Activated naive CD4-positive, alpha-beta T cell treated with anti-CD3 and anti-CD28 coated beads for 36 hours (primary cell): ENCODE measurements at regions of chr12 and their contacts with region 1.

Region 1: GRCh38 chr12:12356886-12357718 is at the start of gene BORCS5:
- DNase-seq: peak; percentile 98
- H3K4me3 Mint-ChIP-seq: peak within 1 kb of the TSS; percentile 81
- H3K27ac Mint-ChIP-seq: peak within 1 kb of the TSS; percentile 90
- H3K4me1 Mint-ChIP-seq: peaks cover 41% of the 10 kb centered on the region
- H3K27me3 Mint-ChIP-seq: no peaks in the 10 kb centered on the region
- total RNA-seq, gene BORCS5: 31.2 to 35.6 TPM

Region 2: DNA sequence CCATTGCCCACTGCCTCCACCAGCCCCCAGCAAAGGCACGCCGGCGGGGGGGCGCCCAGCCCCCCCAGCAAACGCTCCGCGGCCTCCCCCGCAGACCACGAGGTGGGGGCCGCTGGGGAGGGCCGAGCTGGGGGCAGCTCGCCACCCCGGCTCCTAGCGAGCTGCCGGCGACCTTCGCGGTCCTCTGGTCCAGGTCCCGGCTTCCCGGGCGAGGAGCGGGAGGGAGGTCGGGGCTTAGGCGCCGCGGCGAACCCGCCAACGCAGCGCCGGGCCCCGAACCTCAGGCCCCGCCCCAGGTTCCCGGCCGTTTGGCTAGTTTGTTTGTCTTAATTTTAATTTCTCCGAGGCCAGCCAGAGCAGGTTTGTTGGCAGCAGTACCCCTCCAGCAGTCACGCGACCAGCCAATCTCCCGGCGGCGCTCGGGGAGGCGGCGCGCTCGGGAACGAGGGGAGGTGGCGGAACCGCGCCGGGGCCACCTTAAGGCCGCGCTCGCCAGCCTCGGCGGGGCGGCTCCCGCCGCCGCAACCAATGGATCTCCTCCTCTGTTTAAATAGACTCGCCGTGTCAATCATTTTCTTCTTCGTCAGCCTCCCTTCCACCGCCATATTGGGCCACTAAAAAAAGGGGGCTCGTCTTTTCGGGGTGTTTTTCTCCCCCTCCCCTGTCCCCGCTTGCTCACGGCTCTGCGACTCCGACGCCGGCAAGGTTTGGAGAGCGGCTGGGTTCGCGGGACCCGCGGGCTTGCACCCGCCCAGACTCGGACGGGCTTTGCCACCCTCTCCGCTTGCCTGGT is 359.9 kb after region 1 on chr12 and contains the start of gene CDKN1B:
- CTCF ChIA-PET with region 1: interaction called, 3 read pairs
- intact Hi-C with region 1: loop called (anchors 1 kb)
- DNase-seq: peak; percentile 90
- H3K4me3 Mint-ChIP-seq: peak within 1 kb of the TSS; percentile 98
- H3K27ac Mint-ChIP-seq: peak within 1 kb of the TSS; percentile 98
- H3K4me1 Mint-ChIP-seq: peaks cover 55% of the 10 kb centered on the region
- H3K27me3 Mint-ChIP-seq: no peaks in the 10 kb centered on the region
- total RNA-seq, gene CDKN1B: 35.9 to 39.1 TPM

Region 3: DNA sequence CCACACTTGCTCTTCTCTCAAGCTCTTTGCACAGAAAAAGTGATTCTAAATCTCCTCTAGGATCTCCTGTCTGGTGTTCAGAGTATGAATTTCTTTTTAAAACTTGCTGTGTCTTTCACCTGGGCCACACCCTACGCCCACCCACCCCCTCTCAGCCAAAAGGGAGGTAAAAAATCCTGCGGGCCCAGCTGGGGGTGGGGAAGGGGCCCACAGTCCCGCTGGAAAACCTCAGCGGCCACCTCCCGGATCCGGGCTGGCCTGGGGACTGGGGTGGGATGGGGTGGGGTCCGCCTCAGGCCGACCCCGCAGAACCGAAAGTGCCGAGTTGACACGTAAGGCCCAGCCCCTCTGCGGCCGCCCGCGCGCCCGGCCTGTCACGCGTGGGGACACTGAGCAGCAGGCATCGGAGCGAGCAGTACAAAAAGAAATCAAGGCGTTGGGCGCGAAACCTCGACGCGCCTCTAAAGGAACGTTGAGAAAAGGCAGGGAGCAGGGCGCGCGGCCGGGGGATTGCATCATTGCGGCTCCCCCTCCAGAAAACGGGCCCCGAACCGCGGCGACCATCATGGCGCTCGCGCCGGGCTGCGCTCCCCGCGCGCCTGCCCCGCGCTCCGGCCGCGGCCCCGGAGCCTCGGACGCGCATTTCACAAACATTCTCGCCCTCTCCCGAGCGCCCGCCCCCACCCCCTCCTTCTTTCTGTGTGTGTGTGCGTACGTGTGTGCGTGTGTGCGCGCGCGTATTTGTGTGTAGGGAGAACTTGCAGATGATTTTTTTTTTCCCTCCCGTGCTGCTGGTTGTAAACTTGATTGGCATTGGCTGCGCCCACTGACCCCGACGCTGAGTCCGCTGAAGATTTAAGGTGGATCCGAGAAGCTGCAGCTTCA is 367.8 kb after region 1 on chr12:
- CTCF ChIA-PET with region 1: interaction called, 3 read pairs
- intact Hi-C with region 1: loop called (anchors 1 kb)
- DNase-seq: peak; percentile 94
- H3K4me3 Mint-ChIP-seq: peak overlapping the region; percentile 85
- H3K27ac Mint-ChIP-seq: peak overlapping the region; percentile 98
- H3K4me1 Mint-ChIP-seq: peaks cover 51% of the 10 kb centered on the region
- H3K27me3 Mint-ChIP-seq: no peaks in the 10 kb centered on the region

Region 4: GRCh38 chr12:12813120-12814101 is 456.3 kb after region 1 on chr12 and contains the start of gene DDX47:
- CTCF ChIA-PET with region 1: no interaction called
- intact Hi-C with region 1: loop called (anchors 5 kb)
- DNase-seq: peak; percentile 99
- H3K4me3 Mint-ChIP-seq: peak within 1 kb of the TSS; percentile 99
- H3K27ac Mint-ChIP-seq: peak within 1 kb of the TSS; percentile 93
- H3K4me1 Mint-ChIP-seq: peaks cover 57% of the 10 kb centered on the region
- H3K27me3 Mint-ChIP-seq: no peaks in the 10 kb centered on the region
- total RNA-seq, gene DDX47: 86.6 to 87.3 TPM